HCT116 (cell line): ENCODE measurements at regions of chr7 and their contacts with region 1.

Region 1: DNA sequence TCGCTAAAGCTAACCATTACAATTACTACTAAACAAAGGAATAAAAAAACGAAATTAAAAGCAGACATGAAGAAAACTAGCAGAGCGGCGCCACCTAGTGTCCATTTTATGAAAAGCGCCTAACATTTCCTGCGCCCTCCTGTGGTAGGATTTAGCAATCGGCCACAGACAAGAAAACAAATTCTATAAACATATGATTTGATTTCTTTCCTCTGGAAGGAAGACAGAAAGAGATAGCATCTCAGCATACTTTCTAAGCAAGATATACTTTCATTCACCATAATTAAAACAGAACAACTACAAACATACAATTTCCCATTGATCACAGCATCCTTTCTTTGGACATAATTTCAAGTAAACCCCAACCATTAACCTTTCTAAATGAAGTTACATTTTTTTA is 337.7 kb upstream of the NPVF start:
- DNase-seq: peak; percentile 44
- ATAC-seq: no peak
- H3K4me3 ChIP-seq: no peak overlapping the region
- H3K27ac ChIP-seq: no peak overlapping the region
- H3K4me1 ChIP-seq: peaks cover 0 to 8% of the 10 kb centered on the region in 2 experiments; a peak in 1 of 4 replicates
- H3K27me3 ChIP-seq: peaks cover 41% of the 10 kb centered on the region
- CTCF ChIP-seq: peak; percentile 99 to 100 (median 100)
- POLR2A ChIP-seq: no peak
- RAD21 ChIP-seq: peak; percentile 86

Region 2: DNA sequence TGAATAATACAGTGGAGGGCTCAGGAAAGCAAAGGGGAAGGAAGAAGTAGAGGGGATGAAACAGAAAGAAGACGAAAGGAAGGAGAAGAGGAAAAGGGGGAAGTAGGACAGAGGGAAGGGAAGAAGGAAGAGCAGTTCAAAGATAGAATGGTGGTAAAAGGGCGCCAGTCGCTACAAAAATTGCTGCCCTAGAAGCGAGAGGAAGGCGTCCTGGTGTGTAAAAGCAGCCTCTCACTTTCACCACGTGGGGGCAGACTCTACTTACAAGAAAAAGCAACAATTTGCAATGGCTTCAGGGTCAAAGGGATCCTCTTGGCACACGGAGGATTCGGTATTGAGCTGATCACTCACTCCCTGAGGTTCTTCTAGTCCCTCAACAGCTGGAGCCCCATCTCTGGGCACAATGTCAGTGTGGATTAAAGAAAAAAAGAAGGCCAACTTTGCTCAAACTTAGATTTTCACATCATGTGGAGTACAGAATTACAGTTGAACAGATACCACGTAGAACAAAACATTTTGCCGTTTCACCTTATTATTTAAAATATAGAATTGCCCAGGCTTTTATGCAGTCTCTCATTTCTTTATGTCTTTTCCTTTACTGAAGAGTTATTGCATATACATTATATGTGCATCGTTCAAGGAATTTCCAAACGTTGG is 306.2 kb before region 1 on chr7:
- CTCF ChIA-PET with region 1: interaction called, 13 read pairs
- POLR2A ChIA-PET with region 1: no interaction called
- RAD21 ChIA-PET with region 1: interaction called in 1 of 2 experiments, 3 read pairs
- intact Hi-C with region 1: loop called (anchors 1 kb)
- DNase-seq: peak; percentile 44
- ATAC-seq: peak; percentile 91
- H3K4me3 ChIP-seq: no peak overlapping the region
- H3K27ac ChIP-seq: no peak overlapping the region
- H3K4me1 ChIP-seq: peaks cover 0 to 8% of the 10 kb centered on the region in 2 experiments; a peak in 2 of 4 replicates
- H3K27me3 ChIP-seq: peaks cover 41% of the 10 kb centered on the region
- CTCF ChIP-seq: peak; percentile 73 to 91 (median 77)
- POLR2A ChIP-seq: no peak
- RAD21 ChIP-seq: peak; percentile 84

Region 3: DNA sequence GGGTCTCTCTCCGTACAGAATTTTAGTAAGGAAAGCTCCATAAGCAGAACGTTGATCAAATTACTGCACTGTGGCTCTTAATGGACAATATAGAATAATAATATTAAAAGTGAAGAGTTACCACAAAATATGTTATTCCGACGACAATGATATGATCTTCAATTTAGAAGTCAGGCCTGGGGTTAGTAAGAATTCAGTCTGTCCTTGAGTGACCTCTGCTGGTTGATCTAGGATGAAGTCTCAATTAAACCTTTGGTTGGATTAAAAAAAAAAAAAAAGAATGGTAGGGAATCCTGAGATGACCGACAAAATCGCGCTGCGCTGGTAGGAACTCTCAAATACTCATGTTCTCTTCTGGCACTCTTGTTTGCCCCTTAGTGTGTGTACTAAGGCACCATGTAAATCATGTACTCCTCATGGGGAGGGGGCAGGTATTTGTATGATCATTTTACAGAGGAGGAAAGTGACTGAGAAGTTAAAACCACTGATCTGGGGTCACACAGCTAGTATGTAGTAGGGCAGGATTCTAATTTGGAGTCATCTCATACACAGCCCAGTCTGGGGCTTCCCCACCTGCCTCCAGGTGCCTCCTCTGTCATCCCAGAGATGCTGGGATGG is 176.4 kb before region 1 on chr7:
- CTCF ChIA-PET with region 1: interaction called, 93 read pairs
- POLR2A ChIA-PET with region 1: no interaction called
- RAD21 ChIA-PET with region 1: interaction called, 3 to 5 read pairs
- intact Hi-C with region 1: loop called (anchors 1 kb)
- DNase-seq: peak; percentile 31
- ATAC-seq: peak; percentile 59
- H3K4me3 ChIP-seq: no peak overlapping the region
- H3K27ac ChIP-seq: no peak overlapping the region
- H3K4me1 ChIP-seq: no peaks in the 10 kb centered on the region
- H3K27me3 ChIP-seq: peaks cover 27% of the 10 kb centered on the region
- CTCF ChIP-seq: peak; percentile 27 to 47 (median 45); a peak in 4 of 6 replicates
- POLR2A ChIP-seq: no peak
- RAD21 ChIP-seq: peak; percentile 58

Region 4: DNA sequence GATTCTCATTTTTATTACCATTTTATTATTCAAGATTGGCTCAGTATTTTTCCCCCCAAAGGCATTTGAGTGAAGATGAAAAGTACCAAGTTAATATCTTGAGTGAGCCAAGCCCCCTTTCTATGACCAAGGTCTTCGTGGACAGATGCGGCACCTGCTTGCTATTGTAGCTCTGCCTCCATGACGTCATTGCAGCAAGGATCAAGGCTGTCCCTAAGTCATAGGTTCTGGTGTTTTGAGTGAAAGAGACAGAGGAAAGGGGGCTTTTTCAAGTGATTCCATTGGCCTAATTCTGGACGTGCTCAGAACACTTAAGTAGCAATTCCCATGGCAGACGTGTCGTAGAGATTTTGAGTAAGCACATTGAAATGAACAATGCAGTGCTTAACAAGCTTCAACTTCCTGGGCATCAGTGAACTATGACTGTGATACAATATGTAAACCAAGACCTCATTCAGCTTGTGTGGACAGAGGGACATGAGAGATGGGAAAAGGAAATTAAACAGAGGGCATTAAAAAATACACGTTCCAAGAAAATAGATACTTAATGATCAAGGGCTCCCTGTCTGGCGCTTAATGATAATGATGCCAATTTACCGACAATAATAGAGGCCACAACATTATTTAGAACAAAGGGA is 89.0 kb before region 1 on chr7:
- CTCF ChIA-PET with region 1: interaction called, 10 read pairs
- POLR2A ChIA-PET with region 1: no interaction called
- RAD21 ChIA-PET with region 1: no interaction called
- intact Hi-C with region 1: no loop called
- DNase-seq: no peak
- ATAC-seq: no peak
- H3K4me3 ChIP-seq: no peak overlapping the region
- H3K27ac ChIP-seq: no peak overlapping the region
- H3K4me1 ChIP-seq: no peaks in the 10 kb centered on the region
- H3K27me3 ChIP-seq: peaks cover 49% of the 10 kb centered on the region
- CTCF ChIP-seq: no peak
- POLR2A ChIP-seq: no peak
- RAD21 ChIP-seq: no peak